ENCODE measurements at regions of chr1 and their contacts with region 1.

Region 1: GRCh38 chr1:161201828-161202725 is at the start of gene NDUFS2:
- DNase-seq: peak; percentile 85
- H3K4me3 ChIP-seq: peak within 1 kb of the TSS; percentile 78 to 83
- H3K27ac ChIP-seq: peak within 1 kb of the TSS; percentile 74 to 99
- H3K4me1 ChIP-seq: peaks cover 27 to 56% of the 10 kb centered on the region in 2 experiments
- H3K27me3 ChIP-seq: no peaks in the 10 kb centered on the region
- CTCF ChIP-seq: peak; percentile 49
- EP300 ChIP-seq: no peak
- RAD21 ChIP-seq: no peak
- polyA plus RNA-seq, gene NDUFS2: 203 and 210 TPM in 2 replicates

Region 2: GRCh38 chr1:161165742-161166668 is 36.1 kb before region 1 on chr1 and contains the start of gene PPOX:
- CTCF ChIA-PET with region 1: interaction called, 15 read pairs
- POLR2A ChIA-PET with region 1: interaction called, 5 read pairs
- DNase-seq: peak; percentile 90
- H3K4me3 ChIP-seq: peak within 1 kb of the TSS; percentile 80 to 90
- H3K27ac ChIP-seq: peak within 1 kb of the TSS; percentile 86 to 88
- H3K4me1 ChIP-seq: peaks cover 0 to 26% of the 10 kb centered on the region in 2 experiments; a peak in 1 of 4 replicates
- H3K27me3 ChIP-seq: no peaks in the 10 kb centered on the region
- CTCF ChIP-seq: peak; percentile 75
- EP300 ChIP-seq: no peak
- RAD21 ChIP-seq: no peak
- polyA plus RNA-seq, gene PPOX: 30.7 and 47.3 TPM in 2 replicates

Region 3: DNA sequence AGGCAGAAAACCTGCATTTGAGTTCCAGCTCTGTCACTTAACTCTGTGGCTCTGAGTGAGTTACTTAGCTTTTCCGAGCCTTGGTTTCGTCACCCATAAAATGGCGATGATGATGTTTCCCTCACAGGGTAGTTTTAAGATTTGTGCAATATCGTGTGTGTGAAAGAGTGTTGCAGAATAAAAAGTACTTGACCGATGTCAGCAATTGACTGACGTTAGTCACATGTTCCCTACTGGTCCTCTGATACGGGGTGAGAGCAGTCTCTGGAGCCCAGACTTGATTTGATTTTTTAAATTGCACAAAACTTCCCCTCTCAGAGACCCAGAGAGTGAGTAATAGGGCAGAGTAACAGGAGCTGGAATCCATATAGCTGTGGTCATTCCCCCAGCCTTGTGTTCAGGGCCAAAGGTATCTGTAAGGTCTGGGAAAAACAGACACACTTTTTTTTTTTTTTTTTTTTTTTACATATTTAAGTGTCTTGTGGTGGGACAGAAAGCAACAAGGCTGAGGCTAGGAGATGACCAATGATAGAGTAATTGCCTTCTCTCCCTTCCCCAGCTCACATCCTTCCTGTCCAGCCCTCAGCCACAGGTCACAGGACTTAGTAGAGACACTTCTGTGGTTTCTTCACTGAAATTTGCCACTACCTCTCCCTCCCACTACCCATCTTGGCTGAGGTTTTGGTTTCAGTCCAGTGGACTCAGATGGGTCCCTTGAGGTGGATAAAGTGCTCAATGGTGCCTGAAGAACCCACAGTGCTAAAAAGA is 15.1 kb after region 1 on chr1:
- CTCF ChIA-PET with region 1: interaction called, 62 read pairs
- POLR2A ChIA-PET with region 1: interaction called, 6 read pairs
- DNase-seq: no peak
- H3K4me3 ChIP-seq: no peak overlapping the region
- H3K27ac ChIP-seq: peak overlapping the region in 1 of 2 experiments; percentile 43; a peak in 2 of 4 replicates
- H3K4me1 ChIP-seq: no peaks in the 10 kb centered on the region; a peak in 1 of 4 replicates
- H3K27me3 ChIP-seq: no peaks in the 10 kb centered on the region
- CTCF ChIP-seq: no peak
- EP300 ChIP-seq: no peak
- RAD21 ChIP-seq: no peak

Region 4: GRCh38 chr1:161292631-161293030 is 90.6 kb after region 1 on chr1:
- CTCF ChIA-PET with region 1: interaction called, 14 read pairs
- POLR2A ChIA-PET with region 1: no interaction called
- DNase-seq: no peak
- H3K4me3 ChIP-seq: no peak overlapping the region
- H3K27ac ChIP-seq: no peak overlapping the region
- H3K4me1 ChIP-seq: no peaks in the 10 kb centered on the region
- H3K27me3 ChIP-seq: no peaks in the 10 kb centered on the region
- CTCF ChIP-seq: no peak
- EP300 ChIP-seq: no peak
- RAD21 ChIP-seq: no peak

Region 5: DNA sequence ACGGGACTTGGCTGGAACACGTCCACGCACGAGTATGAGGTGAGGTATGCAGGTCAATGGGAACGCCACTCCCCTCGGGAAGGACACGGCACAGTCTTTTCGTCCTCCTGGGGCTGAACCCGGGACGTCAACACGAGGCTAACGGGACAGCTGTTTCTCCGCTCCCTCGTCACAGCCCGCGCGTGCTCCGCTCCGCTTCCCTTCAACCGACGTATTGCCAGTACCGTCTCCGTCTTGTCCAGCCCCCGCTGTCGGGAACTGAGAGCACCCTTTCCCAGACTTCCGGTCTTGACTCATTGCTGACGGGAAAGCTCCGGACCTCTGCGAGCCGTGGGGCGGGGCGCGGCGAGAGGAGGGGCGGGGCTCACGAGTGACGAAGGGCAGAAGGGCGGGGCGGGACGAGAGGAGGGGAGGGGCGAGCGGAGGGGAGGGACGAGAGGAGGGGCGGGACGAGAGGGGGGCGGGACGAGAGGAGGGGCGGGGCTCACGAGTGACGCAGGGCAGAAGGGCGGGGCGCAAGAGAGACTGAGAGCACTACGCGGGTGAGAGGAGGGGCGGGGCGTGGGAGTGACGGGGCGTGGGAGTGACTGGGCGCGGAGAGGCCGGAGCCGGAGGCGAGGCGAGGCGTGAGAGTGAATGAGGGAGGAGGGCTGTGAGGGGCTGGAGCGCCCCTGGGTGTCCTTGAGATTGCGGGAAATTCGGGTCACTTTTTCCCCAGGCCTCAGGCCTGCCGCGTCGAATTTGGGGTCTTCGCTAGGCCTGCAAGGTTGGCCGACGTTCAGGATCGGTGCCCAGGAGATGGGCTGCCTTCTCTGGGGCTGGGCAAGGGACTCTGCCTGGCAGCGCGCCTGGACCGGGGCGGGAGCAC is 187.8 kb after region 1 on chr1:
- CTCF ChIA-PET with region 1: interaction called, 5 read pairs
- POLR2A ChIA-PET with region 1: interaction called, 10 read pairs
- DNase-seq: peak; percentile 94
- H3K4me3 ChIP-seq: peak overlapping the region; percentile 66 to 79
- H3K27ac ChIP-seq: peak overlapping the region; percentile 79 to 96
- H3K4me1 ChIP-seq: peaks cover 0 to 5% of the 10 kb centered on the region in 2 experiments; a peak in 2 of 4 replicates
- H3K27me3 ChIP-seq: no peaks in the 10 kb centered on the region
- CTCF ChIP-seq: no peak
- EP300 ChIP-seq: 0 out of 4 replicates have a peak, but pooled peaks of 1 of the 2 experiments have one; percentile 15
- RAD21 ChIP-seq: no peak

Measured in SK-N-SH (cell line).